CD8-positive, alpha-beta memory T cell (primary cell): ENCODE measurements at regions of chr17 and their contacts with region 1.

Region 1: GRCh38 chr17:2054512-2055291 is at the start of gene HIC1:
- DNase-seq: peak; percentile 68 to 84 (median 79)
- H3K4me3 ChIP-seq: peak within 1 kb of the TSS; percentile 64
- H3K4me3 Mint-ChIP-seq: peak within 1 kb of the TSS; percentile 79 to 92 (median 83)
- H3K27ac ChIP-seq: peak within 1 kb of the TSS; percentile 85
- H3K27ac Mint-ChIP-seq: peak within 1 kb of the TSS; percentile 85 to 97 (median 90)
- H3K4me1 ChIP-seq: peaks cover 18% of the 10 kb centered on the region
- H3K4me1 Mint-ChIP-seq: peaks cover 17 to 38% (median 18%) of the 10 kb centered on the region in 3 donors
- H3K27me3 ChIP-seq: no peaks in the 10 kb centered on the region
- H3K27me3 Mint-ChIP-seq: peaks cover 0 to 3% of the 10 kb centered on the region in 2 donors
- total RNA-seq, gene HIC1: 39.5 to 42.7 TPM

Region 2: DNA sequence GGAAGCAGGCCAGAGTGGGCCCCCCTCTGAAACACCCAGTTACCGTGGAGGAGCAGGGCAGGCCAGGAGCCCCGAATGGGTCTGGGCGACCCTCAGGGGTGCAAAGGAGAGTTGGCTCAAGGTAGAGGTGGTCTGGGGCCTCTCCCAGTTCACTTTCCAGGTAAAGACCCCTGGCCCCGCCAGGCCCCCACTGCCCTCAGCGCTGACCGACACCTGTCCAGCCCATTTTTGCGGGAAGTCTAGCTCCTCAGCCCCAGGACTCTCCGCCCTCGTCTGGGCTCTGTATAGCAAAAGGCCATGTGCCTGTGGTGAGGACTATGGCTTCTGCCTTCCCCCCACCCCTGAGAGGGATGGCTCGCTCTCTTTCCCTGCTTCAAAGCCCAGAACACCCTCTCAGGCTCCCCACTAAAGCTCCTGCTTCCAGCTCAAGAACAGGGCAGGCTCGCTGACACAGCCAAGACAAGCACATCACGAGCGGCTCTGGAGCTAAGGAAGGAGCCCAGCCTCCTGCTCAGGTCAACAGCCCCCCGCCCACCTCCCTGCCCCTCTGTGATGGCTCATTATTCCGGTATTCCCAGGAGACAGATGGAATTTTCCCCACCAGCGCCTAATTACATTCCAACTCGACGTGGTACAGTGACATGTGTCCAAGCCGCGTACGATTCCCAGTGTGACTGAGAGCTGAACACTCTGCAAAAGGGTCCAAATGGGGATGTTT is 89.0 kb before region 1 on chr17:
- CTCF ChIA-PET with region 1: no interaction called
- POLR2A ChIA-PET with region 1: no interaction called
- DNase-seq: no peak
- H3K4me3 ChIP-seq: no peak overlapping the region
- H3K4me3 Mint-ChIP-seq: no peak overlapping the region
- H3K27ac ChIP-seq: no peak overlapping the region
- H3K27ac Mint-ChIP-seq: no peak overlapping the region
- H3K4me1 ChIP-seq: no peaks in the 10 kb centered on the region
- H3K4me1 Mint-ChIP-seq: peaks cover 4 to 8% (median 4%) of the 10 kb centered on the region in 3 donors
- H3K27me3 ChIP-seq: no peaks in the 10 kb centered on the region
- H3K27me3 Mint-ChIP-seq: peaks cover 12 to 30% of the 10 kb centered on the region in 2 donors

Region 3: DNA sequence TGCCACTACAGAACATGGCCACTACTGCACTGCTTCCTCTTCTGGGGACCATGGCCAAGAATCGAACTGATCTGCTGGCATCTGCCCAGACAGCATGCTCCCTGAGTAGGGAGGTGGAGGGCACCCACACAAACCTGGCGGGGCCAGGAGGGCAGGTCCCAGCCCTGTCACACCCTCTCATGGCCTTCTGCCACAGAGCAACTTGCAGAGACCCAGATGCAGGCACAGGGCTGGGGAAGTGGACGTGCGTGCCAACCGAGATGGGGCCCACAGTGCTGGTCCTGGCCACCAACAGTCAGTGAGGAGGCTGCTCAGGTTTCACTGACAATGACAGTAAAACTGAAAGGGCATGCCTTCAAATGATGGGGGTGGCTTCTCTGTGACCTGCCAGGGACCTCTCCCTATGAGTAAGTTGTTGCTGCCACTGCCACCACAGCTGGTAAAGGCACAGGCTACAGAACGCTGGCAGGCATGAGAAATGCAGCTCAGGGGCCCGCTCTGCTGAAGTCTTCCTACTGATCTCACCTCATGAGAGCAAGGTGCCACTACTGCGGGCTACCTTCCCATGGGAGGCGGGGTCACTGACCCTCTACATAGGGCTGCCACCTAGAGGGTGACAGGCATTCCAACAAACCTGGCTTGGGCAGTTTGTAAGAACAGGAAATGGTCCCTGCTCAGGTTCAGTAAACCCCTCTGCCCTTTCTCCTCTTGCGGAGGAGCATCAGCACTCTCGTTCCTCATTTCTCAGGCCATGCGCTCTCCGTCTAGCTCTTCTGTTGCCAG is 15.7 kb after region 1 on chr17:
- CTCF ChIA-PET with region 1: interaction called, 57 read pairs
- POLR2A ChIA-PET with region 1: interaction called, 5 read pairs
- DNase-seq: peak in 1 of 5 donors; percentile 76
- H3K4me3 ChIP-seq: no peak overlapping the region
- H3K4me3 Mint-ChIP-seq: peak overlapping the region in 5 of 7 donors; percentile 44 to 69 (median 55)
- H3K27ac ChIP-seq: no peak overlapping the region
- H3K27ac Mint-ChIP-seq: peak overlapping the region; percentile 65 to 91 (median 84)
- H3K4me1 ChIP-seq: peaks cover 29% of the 10 kb centered on the region
- H3K4me1 Mint-ChIP-seq: peaks cover 33 to 67% (median 46%) of the 10 kb centered on the region in 3 donors
- H3K27me3 ChIP-seq: no peaks in the 10 kb centered on the region
- H3K27me3 Mint-ChIP-seq: no peaks in the 10 kb centered on the region

Region 4: DNA sequence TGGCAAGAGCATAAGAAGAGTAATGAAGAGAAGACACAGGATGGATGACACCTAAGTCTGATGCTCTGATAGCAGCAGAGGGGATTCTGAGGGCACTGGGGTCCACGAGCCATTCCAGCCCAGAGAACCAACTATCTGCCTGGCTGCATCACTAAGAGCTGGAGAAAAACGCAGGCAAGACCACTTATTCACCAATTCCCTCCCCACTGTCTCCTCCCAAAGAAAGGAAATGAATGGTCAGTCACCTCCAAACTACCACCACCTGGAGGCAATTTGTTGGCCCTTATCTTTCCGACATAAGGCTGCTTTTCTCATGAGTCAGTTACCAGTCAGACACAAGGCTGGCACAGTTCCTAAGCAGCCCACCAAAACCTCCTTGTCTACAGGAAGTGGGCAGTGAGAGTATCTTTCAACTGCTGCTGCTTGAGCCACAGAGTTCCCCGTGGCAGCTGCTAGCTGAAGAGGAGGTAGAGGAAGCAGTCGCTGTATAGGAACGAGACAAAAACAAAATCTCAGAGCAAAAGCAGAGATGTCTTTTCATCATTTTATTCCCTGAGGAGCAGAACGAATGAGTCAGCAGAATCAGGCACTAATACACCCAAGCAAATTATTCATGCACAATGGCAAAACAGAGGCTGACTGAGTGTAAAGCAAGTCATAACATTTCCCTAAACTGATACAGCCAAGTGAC is 137.8 kb after region 1 on chr17:
- CTCF ChIA-PET with region 1: interaction called, 11 read pairs
- POLR2A ChIA-PET with region 1: no interaction called
- DNase-seq: peak; percentile 39 to 85 (median 73)
- H3K4me3 ChIP-seq: no peak overlapping the region
- H3K4me3 Mint-ChIP-seq: peak overlapping the region in 6 of 7 donors; percentile 59 to 80 (median 72)
- H3K27ac ChIP-seq: no peak overlapping the region
- H3K27ac Mint-ChIP-seq: peak overlapping the region; percentile 11 to 93 (median 84)
- H3K4me1 ChIP-seq: peaks cover 28% of the 10 kb centered on the region
- H3K4me1 Mint-ChIP-seq: peaks cover 48 to 69% (median 65%) of the 10 kb centered on the region in 3 donors
- H3K27me3 ChIP-seq: no peaks in the 10 kb centered on the region
- H3K27me3 Mint-ChIP-seq: no peaks in the 10 kb centered on the region

Region 5: DNA sequence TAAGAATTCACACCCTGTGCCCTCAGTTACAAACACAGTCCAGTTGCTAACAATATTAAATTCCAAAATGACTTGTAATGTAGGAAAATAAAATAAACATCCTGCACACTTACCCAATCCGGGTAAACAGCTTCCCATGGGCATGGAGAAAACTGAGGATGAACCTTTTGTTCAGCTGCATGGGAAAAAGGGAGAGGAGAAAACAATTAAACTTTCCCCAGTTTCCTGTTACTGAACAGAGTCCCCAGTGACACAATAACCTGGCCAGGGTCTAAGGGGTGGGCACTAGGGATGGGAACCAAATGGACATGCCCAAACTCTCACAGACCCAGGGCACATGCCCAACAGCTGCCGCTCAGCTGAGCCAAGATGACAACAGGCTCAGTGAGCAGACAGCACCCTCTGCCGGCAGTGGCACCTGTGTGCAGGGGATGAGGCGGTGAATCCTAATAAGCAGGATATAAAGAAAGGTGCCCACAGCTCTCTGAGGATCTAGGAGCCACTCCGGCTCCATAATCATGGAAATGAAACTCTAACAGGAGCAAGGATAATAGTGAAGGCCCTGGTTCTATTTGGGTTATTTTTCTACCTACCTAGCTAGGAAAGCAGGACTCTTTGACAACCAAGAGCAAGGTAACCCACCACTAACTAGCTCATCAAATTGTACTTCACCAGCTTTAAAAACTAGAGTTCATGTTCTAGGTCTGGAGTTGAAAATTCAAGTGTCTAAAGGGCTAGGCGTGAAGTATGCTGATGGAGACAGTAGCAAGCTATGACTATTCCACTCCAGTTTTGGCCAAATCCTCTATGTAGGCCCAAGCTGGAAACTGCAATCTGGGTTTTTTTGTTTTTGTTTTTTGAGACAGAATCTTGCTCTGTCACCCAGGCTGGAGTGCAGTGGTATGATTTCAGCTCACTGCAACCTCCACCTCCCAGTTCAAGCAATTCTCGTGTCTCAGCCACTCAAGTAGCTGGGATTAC is 190.1 kb after region 1 on chr17:
- CTCF ChIA-PET with region 1: interaction called, 256 read pairs
- POLR2A ChIA-PET with region 1: interaction called, 37 read pairs
- DNase-seq: peak; percentile 70 to 88 (median 73)
- H3K4me3 ChIP-seq: no peak overlapping the region
- H3K4me3 Mint-ChIP-seq: no peak overlapping the region
- H3K27ac ChIP-seq: no peak overlapping the region
- H3K27ac Mint-ChIP-seq: peak overlapping the region; percentile 21 to 90 (median 82)
- H3K4me1 ChIP-seq: no peaks in the 10 kb centered on the region
- H3K4me1 Mint-ChIP-seq: peaks cover 19 to 45% (median 34%) of the 10 kb centered on the region in 3 donors
- H3K27me3 ChIP-seq: no peaks in the 10 kb centered on the region
- H3K27me3 Mint-ChIP-seq: no peaks in the 10 kb centered on the region

Region 6: DNA sequence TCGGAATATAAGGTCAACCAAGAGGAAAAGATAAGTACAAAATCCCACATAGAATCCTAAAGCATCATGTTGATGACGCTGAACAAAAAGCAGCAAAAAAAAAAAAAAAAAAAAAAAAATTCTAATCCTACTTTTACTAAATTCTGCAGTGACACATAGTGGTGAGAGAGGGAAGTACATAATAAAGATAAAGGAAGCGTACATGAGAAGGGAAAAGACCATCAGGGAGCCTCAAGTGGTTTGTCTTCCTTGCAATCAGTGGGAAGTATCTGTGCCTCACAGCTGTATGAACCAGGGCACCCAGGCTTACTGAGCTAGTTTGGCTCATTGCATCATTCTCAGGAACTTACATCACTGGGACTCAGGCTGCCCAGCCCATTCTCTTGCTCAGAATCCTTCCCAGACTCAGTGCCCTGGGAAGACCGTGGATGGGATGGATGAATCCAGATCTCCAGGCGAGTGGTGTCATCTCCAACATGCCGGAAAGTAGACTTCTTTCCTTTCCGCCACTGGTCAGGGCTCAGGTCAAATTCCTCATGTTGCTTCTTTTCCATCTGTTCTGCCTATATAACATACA is 227.7 kb after region 1 on chr17:
- CTCF ChIA-PET with region 1: interaction called, 121 read pairs
- POLR2A ChIA-PET with region 1: interaction called, 3 read pairs
- DNase-seq: peak in 2 of 5 donors; percentile 56 to 65
- H3K4me3 ChIP-seq: no peak overlapping the region
- H3K4me3 Mint-ChIP-seq: peak overlapping the region in 1 of 7 donors; percentile 24
- H3K27ac ChIP-seq: no peak overlapping the region
- H3K27ac Mint-ChIP-seq: peak overlapping the region in 7 of 8 donors; percentile 11 to 85 (median 57)
- H3K4me1 ChIP-seq: peaks cover 7% of the 10 kb centered on the region
- H3K4me1 Mint-ChIP-seq: peaks cover 7 to 14% (median 14%) of the 10 kb centered on the region in 3 donors
- H3K27me3 ChIP-seq: no peaks in the 10 kb centered on the region
- H3K27me3 Mint-ChIP-seq: no peaks in the 10 kb centered on the region